CD8-positive, alpha-beta T cell (primary cell): ENCODE measurements at regions of chr17 and their contacts with region 1.

Region 1: DNA sequence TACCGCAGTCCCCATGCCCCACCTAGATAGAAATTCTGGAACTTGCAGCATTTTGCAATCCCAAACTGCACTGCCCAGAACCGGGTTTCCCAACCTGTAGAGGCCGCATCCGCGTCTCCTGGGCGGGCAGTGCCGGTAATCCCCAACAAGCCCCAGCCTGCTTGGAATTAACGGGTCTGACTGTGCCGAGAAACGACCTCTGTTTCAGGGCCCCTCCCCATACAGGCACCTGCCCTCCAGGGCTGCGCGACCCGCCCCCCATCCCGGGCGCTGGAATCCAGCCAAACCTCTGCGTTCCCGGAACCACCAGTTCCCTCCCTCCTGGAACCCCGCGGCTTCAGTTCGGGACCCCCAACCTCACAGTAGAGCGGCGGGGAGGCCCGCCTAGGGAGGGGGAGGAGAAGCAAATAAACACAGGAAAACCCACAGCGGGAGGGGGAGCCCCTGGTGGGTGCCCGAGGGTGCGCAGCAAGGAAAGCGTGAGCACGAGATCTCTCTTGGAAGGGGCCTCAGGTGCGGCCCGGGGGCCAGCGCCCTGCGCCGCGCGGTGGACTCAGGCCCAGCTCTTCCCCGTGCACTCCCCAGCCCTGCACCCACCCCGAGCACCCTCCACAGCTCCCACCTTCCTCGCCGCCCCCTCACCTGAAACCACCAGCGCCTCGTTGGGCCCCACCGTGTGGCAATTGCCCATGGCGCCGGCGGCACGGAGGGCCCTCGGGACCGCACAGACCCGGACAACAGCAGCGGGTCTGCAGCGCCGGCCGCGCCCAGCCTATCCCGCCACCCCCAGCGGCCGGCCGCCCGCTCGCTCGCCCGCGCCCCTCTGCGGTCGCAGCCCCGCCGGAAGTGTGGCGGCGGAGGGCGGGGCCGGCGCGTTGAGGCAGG is at the start of gene FLOT2:
- DNase-seq: peak; percentile 37 to 86 (median 75)
- ATAC-seq: peak; percentile 78
- H3K4me3 ChIP-seq: peak within 1 kb of the TSS; percentile 77 to 81
- H3K4me3 Mint-ChIP-seq: peak within 1 kb of the TSS; percentile 96
- H3K27ac ChIP-seq: peak within 1 kb of the TSS; percentile 85 to 88
- H3K27ac Mint-ChIP-seq: peak within 1 kb of the TSS; percentile 96
- H3K4me1 ChIP-seq: peaks cover 63% of the 10 kb centered on the region
- H3K4me1 Mint-ChIP-seq: peaks cover 62% of the 10 kb centered on the region
- H3K27me3 ChIP-seq: no peaks in the 10 kb centered on the region
- H3K27me3 Mint-ChIP-seq: no peaks in the 10 kb centered on the region
- CTCF ChIP-seq: peak; percentile 43
- total RNA-seq, gene FLOT2: 69.7 to 71.6 TPM

Region 2: GRCh38 chr17:27862004-27862403 is 1035.1 kb before region 1 on chr17:
- CTCF ChIA-PET with region 1: no interaction called
- POLR2A ChIA-PET with region 1: no interaction called
- intact Hi-C with region 1: no loop called
- DNase-seq: no peak
- ATAC-seq: no peak
- H3K4me3 ChIP-seq: no peak overlapping the region
- H3K4me3 Mint-ChIP-seq: no peak overlapping the region
- H3K27ac ChIP-seq: no peak overlapping the region
- H3K27ac Mint-ChIP-seq: no peak overlapping the region
- H3K4me1 ChIP-seq: no peaks in the 10 kb centered on the region
- H3K4me1 Mint-ChIP-seq: no peaks in the 10 kb centered on the region
- H3K27me3 ChIP-seq: no peaks in the 10 kb centered on the region
- H3K27me3 Mint-ChIP-seq: no peaks in the 10 kb centered on the region
- CTCF ChIP-seq: no peak

Region 3: GRCh38 chr17:28661635-28662537 is 235.2 kb before region 1 on chr17 and contains the starts of genes SDF2 and SUPT6H:
- CTCF ChIA-PET with region 1: no interaction called
- POLR2A ChIA-PET with region 1: no interaction called
- intact Hi-C with region 1: loop called in 1 of 2 experiments (anchors 5 kb)
- DNase-seq: peak; percentile 83 to 97 (median 96)
- ATAC-seq: peak; percentile 85
- H3K4me3 ChIP-seq: peak within 1 kb of the TSS; percentile 91 to 94
- H3K4me3 Mint-ChIP-seq: peak within 1 kb of the TSS; percentile 98
- H3K27ac ChIP-seq: peak within 1 kb of the TSS; percentile 98 to 99
- H3K27ac Mint-ChIP-seq: peak within 1 kb of the TSS; percentile 99
- H3K4me1 ChIP-seq: peaks cover 43% of the 10 kb centered on the region
- H3K4me1 Mint-ChIP-seq: peaks cover 60% of the 10 kb centered on the region
- H3K27me3 ChIP-seq: no peaks in the 10 kb centered on the region
- H3K27me3 Mint-ChIP-seq: no peaks in the 10 kb centered on the region
- CTCF ChIP-seq: peak; percentile 20
- total RNA-seq, gene SDF2: 30.4 to 38.3 TPM
- total RNA-seq, gene SUPT6H: 163 to 169 TPM

Region 4: GRCh38 chr17:28812091-28812747 is 84.9 kb before region 1 on chr17:
- CTCF ChIA-PET with region 1: interaction called, 5 read pairs
- POLR2A ChIA-PET with region 1: interaction called, 4 read pairs
- intact Hi-C with region 1: loop called in 1 of 2 experiments (anchors 1 kb)
- DNase-seq: peak; percentile 90 to 98 (median 96)
- ATAC-seq: peak; percentile 96
- H3K4me3 ChIP-seq: peak overlapping the region; percentile 67 to 99
- H3K4me3 Mint-ChIP-seq: peak overlapping the region; percentile 94
- H3K27ac ChIP-seq: peak overlapping the region; percentile 93 to 96
- H3K27ac Mint-ChIP-seq: peak overlapping the region; percentile 93
- H3K4me1 ChIP-seq: peaks cover 18% of the 10 kb centered on the region
- H3K4me1 Mint-ChIP-seq: peaks cover 35% of the 10 kb centered on the region
- H3K27me3 ChIP-seq: no peaks in the 10 kb centered on the region
- H3K27me3 Mint-ChIP-seq: no peaks in the 10 kb centered on the region
- CTCF ChIP-seq: no peak

Region 5: DNA sequence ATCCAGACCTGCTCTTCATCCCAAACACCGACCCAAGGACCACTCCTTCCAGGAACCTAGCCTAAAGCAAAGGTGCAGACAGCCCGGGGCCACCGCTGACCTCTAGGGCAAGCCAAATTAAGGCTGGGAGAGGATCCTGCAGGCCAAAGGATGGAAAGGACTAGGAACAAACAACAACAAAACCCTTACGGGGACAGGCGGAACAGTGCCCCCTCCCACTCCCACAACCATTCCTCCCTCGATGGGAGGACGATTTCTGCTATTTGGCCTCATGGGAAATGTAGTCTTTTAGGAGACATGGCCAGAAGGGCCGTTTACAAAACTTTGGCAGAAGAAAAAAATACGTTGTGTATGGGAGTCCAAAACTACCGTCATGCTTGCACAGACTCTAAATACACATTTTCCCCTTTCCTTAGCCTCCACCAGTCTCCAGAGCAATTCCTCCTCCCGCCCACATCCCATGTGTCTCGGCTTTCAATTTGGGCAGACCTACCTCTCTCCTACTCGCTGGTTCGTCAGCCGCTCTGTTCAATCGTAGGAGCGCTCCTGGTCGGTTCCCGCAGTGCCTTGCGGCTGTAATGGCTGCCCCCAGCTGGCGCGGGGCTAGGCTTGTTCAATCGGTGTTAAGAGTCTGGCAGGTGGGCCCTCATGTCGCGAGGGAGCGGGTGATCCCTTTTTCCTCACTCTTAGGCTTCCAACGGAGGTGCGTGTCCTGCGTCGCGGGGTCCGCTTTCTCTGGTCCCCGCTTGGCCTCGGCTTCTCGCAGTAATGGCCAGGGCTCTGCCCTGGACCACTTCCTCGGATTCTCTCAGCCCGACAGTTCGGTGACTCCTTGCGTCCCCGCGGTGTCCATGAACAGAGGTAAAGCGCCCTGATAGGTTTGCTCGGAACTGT is 42.4 kb before region 1 on chr17 and contains the start of gene ERAL1:
- CTCF ChIA-PET with region 1: interaction called, 7 read pairs
- POLR2A ChIA-PET with region 1: interaction called, 5 read pairs
- intact Hi-C with region 1: loop called (anchors 1 to 2 kb)
- DNase-seq: peak; percentile 62 to 90 (median 84)
- ATAC-seq: peak; percentile 99
- H3K4me3 ChIP-seq: peak within 1 kb of the TSS; percentile 75 to 96
- H3K4me3 Mint-ChIP-seq: peak within 1 kb of the TSS; percentile 95
- H3K27ac ChIP-seq: peak within 1 kb of the TSS; percentile 61 to 74
- H3K27ac Mint-ChIP-seq: peak within 1 kb of the TSS; percentile 90
- H3K4me1 ChIP-seq: peaks cover 12% of the 10 kb centered on the region
- H3K4me1 Mint-ChIP-seq: peaks cover 18% of the 10 kb centered on the region
- H3K27me3 ChIP-seq: no peaks in the 10 kb centered on the region
- H3K27me3 Mint-ChIP-seq: no peaks in the 10 kb centered on the region
- CTCF ChIP-seq: no peak
- total RNA-seq, gene ERAL1: 20.0 to 21.2 TPM

Region 6: GRCh38 chr17:28916302-28916934 is 19.3 kb after region 1 on chr17:
- CTCF ChIA-PET with region 1: interaction called, 13 read pairs
- POLR2A ChIA-PET with region 1: interaction called, 3 read pairs
- intact Hi-C with region 1: no loop called
- DNase-seq: peak in 6 of 9 experiments; percentile 44 to 67 (median 54)
- ATAC-seq: peak; percentile 75
- H3K4me3 ChIP-seq: no peak overlapping the region
- H3K4me3 Mint-ChIP-seq: no peak overlapping the region
- H3K27ac ChIP-seq: no peak overlapping the region
- H3K27ac Mint-ChIP-seq: peak overlapping the region; percentile 65
- H3K4me1 ChIP-seq: no peaks in the 10 kb centered on the region
- H3K4me1 Mint-ChIP-seq: peaks cover 1% of the 10 kb centered on the region
- H3K27me3 ChIP-seq: no peaks in the 10 kb centered on the region
- H3K27me3 Mint-ChIP-seq: no peaks in the 10 kb centered on the region
- CTCF ChIP-seq: peak; percentile 74

Region 7: DNA sequence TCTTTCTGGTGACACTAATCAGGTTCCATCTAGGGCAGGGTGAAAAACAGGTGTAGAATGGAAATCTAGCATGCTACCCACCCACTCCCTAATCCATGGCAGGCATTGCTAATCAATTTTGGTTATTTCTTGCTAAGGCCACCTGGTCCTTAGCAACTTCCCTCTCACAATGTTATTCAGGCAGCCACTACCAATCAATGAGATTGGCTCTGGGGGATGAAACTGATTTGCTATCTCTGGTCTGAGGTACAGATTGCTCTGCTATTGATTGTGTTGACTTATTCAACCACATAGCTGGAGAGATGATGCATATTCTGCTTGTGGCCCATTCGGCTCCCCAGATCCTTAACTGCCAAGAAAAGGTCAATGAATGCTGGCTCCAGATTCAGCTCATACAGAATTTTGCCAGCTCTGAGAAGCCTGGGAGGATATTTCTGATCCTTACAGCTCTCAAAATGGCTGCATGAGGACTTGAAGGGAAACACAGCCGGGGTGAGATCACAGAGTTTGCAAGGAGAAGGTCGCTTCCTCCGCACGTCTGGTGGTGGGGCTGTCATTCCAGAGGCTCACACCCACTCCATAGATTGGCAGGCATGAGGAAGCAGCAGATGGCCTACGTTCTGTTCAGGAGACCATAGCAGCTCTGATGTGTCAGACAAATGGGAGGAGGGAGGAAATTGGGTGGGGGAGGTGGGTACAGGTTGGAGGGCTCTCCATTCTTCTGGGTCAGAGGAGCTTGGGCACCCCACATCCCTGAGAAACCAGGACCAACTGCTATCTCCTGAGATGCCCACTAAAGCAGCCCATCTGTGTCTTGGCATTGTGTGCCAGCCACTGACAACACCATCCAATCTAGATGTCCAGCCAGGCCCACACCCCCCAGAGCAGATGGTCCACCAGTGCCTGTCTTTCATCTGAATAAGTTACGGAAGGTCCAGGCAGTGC is 86.4 kb after region 1 on chr17:
- CTCF ChIA-PET with region 1: no interaction called
- POLR2A ChIA-PET with region 1: no interaction called
- intact Hi-C with region 1: no loop called
- DNase-seq: no peak
- ATAC-seq: no peak
- H3K4me3 ChIP-seq: no peak overlapping the region
- H3K4me3 Mint-ChIP-seq: no peak overlapping the region
- H3K27ac ChIP-seq: peak overlapping the region; percentile 49 to 96
- H3K27ac Mint-ChIP-seq: peak overlapping the region; percentile 94
- H3K4me1 ChIP-seq: peaks cover 26% of the 10 kb centered on the region
- H3K4me1 Mint-ChIP-seq: peaks cover 23% of the 10 kb centered on the region
- H3K27me3 ChIP-seq: no peaks in the 10 kb centered on the region
- H3K27me3 Mint-ChIP-seq: no peaks in the 10 kb centered on the region
- CTCF ChIP-seq: no peak

Region 8: GRCh38 chr17:29243792-29244191 is 346.7 kb after region 1 on chr17:
- CTCF ChIA-PET with region 1: no interaction called
- POLR2A ChIA-PET with region 1: no interaction called
- intact Hi-C with region 1: no loop called
- DNase-seq: peak in 2 of 9 experiments; percentile 16
- ATAC-seq: no peak
- H3K4me3 ChIP-seq: no peak overlapping the region
- H3K4me3 Mint-ChIP-seq: no peak overlapping the region
- H3K27ac ChIP-seq: no peak overlapping the region
- H3K27ac Mint-ChIP-seq: no peak overlapping the region
- H3K4me1 ChIP-seq: no peaks in the 10 kb centered on the region
- H3K4me1 Mint-ChIP-seq: no peaks in the 10 kb centered on the region
- H3K27me3 ChIP-seq: no peaks in the 10 kb centered on the region
- H3K27me3 Mint-ChIP-seq: no peaks in the 10 kb centered on the region
- CTCF ChIP-seq: no peak

Region 9: GRCh38 chr17:29341751-29342150 is 444.6 kb after region 1 on chr17:
- CTCF ChIA-PET with region 1: no interaction called
- POLR2A ChIA-PET with region 1: no interaction called
- intact Hi-C with region 1: no loop called
- DNase-seq: no peak
- ATAC-seq: no peak
- H3K4me3 ChIP-seq: no peak overlapping the region
- H3K4me3 Mint-ChIP-seq: no peak overlapping the region
- H3K27ac ChIP-seq: no peak overlapping the region
- H3K27ac Mint-ChIP-seq: no peak overlapping the region
- H3K4me1 ChIP-seq: no peaks in the 10 kb centered on the region
- H3K4me1 Mint-ChIP-seq: peaks cover 2% of the 10 kb centered on the region
- H3K27me3 ChIP-seq: no peaks in the 10 kb centered on the region
- H3K27me3 Mint-ChIP-seq: no peaks in the 10 kb centered on the region
- CTCF ChIP-seq: no peak